Psoas muscle (tissue), 8 donors: ENCODE measurements at regions of chr7 and their contacts with region 1.

Region 1: DNA sequence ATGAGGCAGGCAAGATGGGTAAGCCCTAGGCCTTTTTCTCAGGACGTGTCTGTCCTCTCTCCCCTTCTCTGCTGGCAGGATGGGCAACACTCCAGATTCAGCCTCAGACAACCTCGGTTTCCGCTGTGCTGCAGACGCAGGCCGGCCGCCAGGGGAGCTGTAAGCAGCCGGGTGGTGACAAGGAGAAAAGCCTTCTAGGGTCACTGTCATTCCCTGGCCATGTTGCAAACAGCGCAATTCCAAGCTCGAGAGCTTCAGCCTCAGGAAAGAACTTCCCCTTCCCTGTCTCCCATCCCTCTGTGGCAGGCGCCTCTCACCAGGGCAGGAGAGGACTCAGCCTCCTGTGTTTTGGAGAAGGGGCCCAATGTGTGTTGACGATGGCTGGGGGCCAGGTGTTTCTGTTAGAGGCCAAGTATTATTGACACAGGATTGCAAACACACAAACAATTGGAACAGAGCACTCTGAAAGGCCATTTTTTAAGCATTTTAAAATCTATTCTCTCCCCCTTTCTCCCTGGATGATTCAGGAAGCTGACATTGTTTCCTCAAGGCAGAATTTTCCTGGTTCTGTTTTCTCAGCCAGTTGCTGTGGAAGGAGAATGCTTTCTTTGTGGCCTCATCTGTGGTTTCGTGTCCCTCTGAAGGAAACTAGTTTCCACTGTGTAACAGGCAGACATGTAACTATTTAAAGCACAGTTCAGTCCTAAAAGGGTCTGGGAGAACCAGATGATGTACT is 13.1 kb downstream of the PHKG1 start:
- DNase-seq: peak; percentile 87 to 96
- ATAC-seq: peak; percentile 82 to 86 (median 82)
- H3K4me3 ChIP-seq: no peak overlapping the region
- H3K27ac ChIP-seq: peak overlapping the region; percentile 74
- H3K4me1 ChIP-seq: peaks cover 53% of the 10 kb centered on the region
- H3K27me3 ChIP-seq: no peaks in the 10 kb centered on the region
- CTCF ChIP-seq: peak; percentile 83

Region 2: GRCh38 chr7:54932818-54933543 is 1146.6 kb before region 1 on chr7:
- intact Hi-C with region 1: no loop called
- DNase-seq: peak; percentile 67 to 82
- ATAC-seq: peak; percentile 81 to 93 (median 86)
- H3K4me3 ChIP-seq: peak overlapping the region; percentile 64
- H3K27ac ChIP-seq: peak overlapping the region; percentile 40
- H3K4me1 ChIP-seq: peaks cover 7% of the 10 kb centered on the region
- H3K27me3 ChIP-seq: peaks cover 0 to 2% (median 0%) of the 10 kb centered on the region in 3 donors
- CTCF ChIP-seq: no peak

Region 3: GRCh38 chr7:56092789-56093531 is 13.3 kb after region 1 on chr7 and contains the start of gene PHKG1:
- intact Hi-C with region 1: loop called in 1 of 2 experiments (anchors 2 kb)
- DNase-seq: peak; percentile 87 to 93
- ATAC-seq: peak; percentile 89 to 91 (median 90)
- H3K4me3 ChIP-seq: peak within 1 kb of the TSS; percentile 67
- H3K27ac ChIP-seq: peak within 1 kb of the TSS; percentile 86
- H3K4me1 ChIP-seq: peaks cover 33% of the 10 kb centered on the region
- H3K27me3 ChIP-seq: no peaks in the 10 kb centered on the region
- CTCF ChIP-seq: peak; percentile 75
- total RNA-seq, gene PHKG1: 32.2 to 99.6 (median 46.3) TPM